Ovary (tissue), 10 donors: ENCODE measurements at regions of chr7 and their contacts with region 1.

Region 1: DNA sequence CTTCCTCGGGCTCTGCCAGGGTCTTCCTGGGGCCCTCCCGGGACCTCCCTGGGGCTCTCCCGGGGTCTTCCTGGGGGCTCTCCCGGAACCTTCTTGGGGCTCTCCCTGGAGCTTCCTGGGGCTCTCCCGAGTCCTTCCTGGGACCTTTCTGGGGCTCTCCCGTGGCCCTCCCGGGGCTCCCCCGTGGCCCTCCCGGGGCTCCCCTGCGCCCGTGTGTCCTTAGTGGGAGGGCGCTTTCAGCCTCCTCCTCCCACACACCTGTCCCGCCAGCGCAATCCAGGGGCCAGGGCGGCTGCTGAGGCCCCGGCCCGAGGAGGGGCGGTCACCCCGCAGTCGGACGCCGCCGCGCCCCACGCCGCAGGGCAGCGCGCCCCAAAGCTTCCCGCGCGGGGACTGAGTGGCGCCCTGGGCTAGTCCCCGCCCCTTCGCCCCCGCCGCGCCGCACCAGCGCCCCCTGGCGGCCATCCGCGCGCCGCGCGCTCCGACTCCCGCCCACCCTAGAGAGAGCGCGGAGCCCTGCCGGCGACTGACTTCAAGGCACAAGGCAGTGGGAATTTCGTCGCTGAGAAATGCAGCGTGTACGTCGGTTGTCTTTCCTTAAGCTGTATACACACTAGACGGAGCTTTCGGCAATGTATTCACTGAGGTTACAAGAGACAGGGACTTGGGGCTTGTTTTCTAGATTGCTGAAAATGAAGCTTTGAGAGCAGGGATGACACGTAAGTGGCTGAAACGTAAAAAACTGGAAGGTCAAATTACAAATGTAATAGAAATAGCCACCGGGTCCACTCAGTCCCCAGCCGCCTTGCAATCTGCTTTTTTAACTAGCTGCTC is 47.1 kb downstream of the INSIG1 start:
- DNase-seq: peak; percentile 64 to 88 (median 79)
- H3K4me3 ChIP-seq: peak overlapping the region; percentile 31
- H3K27ac ChIP-seq: no peak overlapping the region
- H3K4me1 ChIP-seq: no peaks in the 10 kb centered on the region
- H3K27me3 ChIP-seq: no peaks in the 10 kb centered on the region
- CTCF ChIP-seq: peak; percentile 80 to 93 (median 90)
- EP300 ChIP-seq: no peak
- POLR2A ChIP-seq: no peak

Region 2: GRCh38 chr7:155003376-155004214 is 341.2 kb before region 1 on chr7:
- intact Hi-C with region 1: loop called in 1 of 4 experiments (anchors 10 kb)
- DNase-seq: peak in 4 of 5 donors; percentile 76 to 91 (median 84)
- H3K4me3 ChIP-seq: peak overlapping the region; percentile 56
- H3K27ac ChIP-seq: peak overlapping the region; percentile 90 to 95
- H3K4me1 ChIP-seq: peaks cover 10% of the 10 kb centered on the region
- H3K27me3 ChIP-seq: no peaks in the 10 kb centered on the region
- CTCF ChIP-seq: no peak
- EP300 ChIP-seq: no peak
- POLR2A ChIP-seq: peak; percentile 65

Region 3: GRCh38 chr7:155190688-155191087 is 154.1 kb before region 1 on chr7:
- intact Hi-C with region 1: loop called in 3 of 4 experiments (anchors 2 to 10 kb)
- DNase-seq: peak in 1 of 5 donors; percentile 59
- H3K4me3 ChIP-seq: no peak overlapping the region
- H3K27ac ChIP-seq: no peak overlapping the region
- H3K4me1 ChIP-seq: no peaks in the 10 kb centered on the region
- H3K27me3 ChIP-seq: no peaks in the 10 kb centered on the region
- CTCF ChIP-seq: peak in 1 of 3 donors; percentile 13
- EP300 ChIP-seq: no peak
- POLR2A ChIP-seq: no peak